H1 (cell line): ENCODE measurements at regions of chr7 and their contacts with region 1.

Region 1: GRCh38 chr7:101815835-101816493 is 1.5 kb upstream of the CUX1 start:
- DNase-seq: peak; percentile 33 to 78
- H3K4me3 ChIP-seq: peak overlapping the region; percentile 61 to 88 (median 65)
- H3K27ac ChIP-seq: peak overlapping the region; percentile 47; the same call in 1 of the 2 replicates
- H3K4me1 ChIP-seq: peaks cover 9 to 23% (median 10%) of the 10 kb centered on the region in 4 experiments
- H3K27me3 ChIP-seq: peaks cover 0 to 14% (median 7%) of the 10 kb centered on the region in 4 experiments; a peak in 6 of 7 replicates
- CTCF ChIP-seq: no peak
- EP300 ChIP-seq: peak in 1 of 2 experiments; percentile 81; a peak in 1 of 3 replicates
- POLR2A ChIP-seq: peak in 1 of 2 experiments; percentile 43; a peak in 1 of 3 replicates
- RAD21 ChIP-seq: 0 out of 4 replicates have a peak, but pooled peaks have one; percentile 4 to 28

Region 2: DNA sequence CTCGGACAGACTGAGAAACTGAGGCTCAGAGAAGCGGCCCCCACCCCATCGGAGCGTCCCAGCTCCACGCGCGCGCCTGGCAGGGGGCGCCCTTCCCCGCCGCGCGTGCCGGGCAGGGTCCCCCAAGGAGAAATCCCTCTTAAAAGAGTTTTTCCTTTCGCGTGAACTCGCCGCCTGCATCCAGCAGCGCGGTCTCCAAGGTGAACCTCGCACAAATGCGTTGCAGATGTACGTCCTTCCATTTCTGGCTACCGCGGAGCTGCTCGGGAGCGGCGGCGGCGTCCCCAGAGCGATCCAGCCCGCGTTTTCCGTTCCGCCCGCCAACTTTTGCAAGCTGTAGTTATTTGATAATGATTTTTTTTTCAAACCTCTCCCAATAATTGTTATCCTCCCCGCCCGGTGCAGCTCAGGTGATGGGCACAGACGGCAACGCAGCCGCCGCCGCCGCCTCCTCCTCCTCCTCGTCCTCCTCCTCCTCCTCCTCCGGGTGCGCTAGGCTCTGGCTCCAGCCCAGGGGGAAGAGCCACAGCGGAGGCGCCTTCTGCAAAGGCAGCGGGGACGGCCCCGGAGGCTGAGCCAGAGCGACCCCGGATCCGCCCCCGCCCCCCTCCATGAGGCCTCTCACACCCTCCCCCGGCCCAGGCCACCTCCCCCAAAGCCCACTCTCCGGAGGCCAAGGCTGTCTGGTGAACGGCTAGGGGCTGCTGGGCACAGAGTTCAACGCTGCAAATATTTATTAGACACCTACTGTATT is 72.5 kb before region 1 on chr7:
- CTCF ChIA-PET with region 1: interaction called, 3 read pairs
- POLR2A ChIA-PET with region 1: interaction called, 12 read pairs
- DNase-seq: peak; percentile 25 to 81
- H3K4me3 ChIP-seq: peak overlapping the region; percentile 52 to 85 (median 60)
- H3K27ac ChIP-seq: peak overlapping the region; percentile 71; the same call in 1 of the 2 replicates
- H3K4me1 ChIP-seq: peaks cover 0 to 13% (median 9%) of the 10 kb centered on the region in 4 experiments; a peak in 6 of 7 replicates
- H3K27me3 ChIP-seq: no peaks in the 10 kb centered on the region
- CTCF ChIP-seq: peak in 1 of 3 experiments; percentile 8; a peak in 1 of 4 replicates
- EP300 ChIP-seq: no peak
- POLR2A ChIP-seq: no peak
- RAD21 ChIP-seq: peak in 1 of 2 experiments; percentile 3; a peak in 1 of 4 replicates